PC-3 (cell line): ENCODE measurements at regions of chr2 and their contacts with region 1.

Region 1: GRCh38 chr2:140502951-140503630 is 1627.7 kb downstream of the LRP1B start:
- DNase-seq: peak; percentile 95
- ATAC-seq: peak; percentile 99
- H3K4me3 ChIP-seq: peak overlapping the region; percentile 61
- H3K27ac ChIP-seq: peak overlapping the region; percentile 93
- H3K4me1 ChIP-seq: peaks cover 23% of the 10 kb centered on the region
- H3K27me3 ChIP-seq: no peaks in the 10 kb centered on the region
- CTCF ChIP-seq: no peak

Region 2: GRCh38 chr2:140344842-140345241 is 158.2 kb before region 1 on chr2:
- CTCF ChIA-PET with region 1: no interaction called
- POLR2A ChIA-PET with region 1: no interaction called
- intact Hi-C with region 1: loop called (anchors 5 kb)
- DNase-seq: peak; percentile 90
- ATAC-seq: peak; percentile 88
- H3K4me3 ChIP-seq: peak overlapping the region; percentile 58; the same call in 1 of the 2 replicates
- H3K27ac ChIP-seq: peak overlapping the region; percentile 93
- H3K4me1 ChIP-seq: peaks cover 18% of the 10 kb centered on the region
- H3K27me3 ChIP-seq: no peaks in the 10 kb centered on the region
- CTCF ChIP-seq: no peak

Region 3: DNA sequence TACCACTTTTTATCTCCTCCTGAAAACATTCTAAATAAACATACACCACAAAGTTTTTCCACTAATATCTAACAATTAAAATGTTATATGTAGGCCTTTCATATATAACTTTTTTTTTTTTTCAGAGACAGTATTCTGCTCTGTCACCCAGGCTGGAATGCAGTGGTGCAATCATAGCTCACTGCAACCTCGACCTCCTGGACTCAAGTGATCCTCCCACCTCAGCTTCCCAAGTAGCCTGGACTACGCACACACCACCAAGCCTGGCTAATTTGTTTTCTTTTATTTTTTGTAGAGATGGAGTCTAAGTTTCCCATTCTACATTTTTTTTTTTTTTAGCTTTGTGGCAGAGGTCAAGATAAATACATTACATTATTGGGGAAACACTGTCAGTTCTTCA is 110.3 kb before region 1 on chr2:
- CTCF ChIA-PET with region 1: no interaction called
- POLR2A ChIA-PET with region 1: no interaction called
- intact Hi-C with region 1: loop called (anchors 1 kb)
- DNase-seq: no peak
- ATAC-seq: no peak
- H3K4me3 ChIP-seq: no peak overlapping the region
- H3K27ac ChIP-seq: no peak overlapping the region
- H3K4me1 ChIP-seq: peaks cover 26% of the 10 kb centered on the region
- H3K27me3 ChIP-seq: no peaks in the 10 kb centered on the region
- CTCF ChIP-seq: no peak

Region 4: DNA sequence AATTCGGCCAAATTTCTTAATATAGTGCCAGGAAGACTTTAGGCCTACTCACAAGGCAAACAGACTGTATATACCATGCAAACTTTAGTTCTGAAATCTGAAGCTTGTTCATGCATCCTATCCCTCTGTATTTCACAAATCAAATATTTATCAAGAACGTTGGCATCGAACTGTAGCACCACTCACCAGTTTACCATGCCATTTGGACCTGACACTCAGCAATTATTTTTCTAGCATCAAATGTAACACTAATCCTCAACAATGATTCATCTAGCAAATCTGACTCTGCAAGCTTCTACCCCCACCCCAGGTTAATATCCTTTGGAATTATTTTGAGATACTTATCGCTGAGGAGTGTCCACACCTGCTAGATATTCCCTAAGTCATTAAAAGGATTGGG is 121.1 kb after region 1 on chr2:
- CTCF ChIA-PET with region 1: no interaction called
- POLR2A ChIA-PET with region 1: no interaction called
- intact Hi-C with region 1: loop called (anchors 10 kb)
- DNase-seq: peak; percentile 94
- ATAC-seq: peak; percentile 99
- H3K4me3 ChIP-seq: no peak overlapping the region
- H3K27ac ChIP-seq: peak overlapping the region; percentile 75
- H3K4me1 ChIP-seq: peaks cover 21% of the 10 kb centered on the region
- H3K27me3 ChIP-seq: no peaks in the 10 kb centered on the region
- CTCF ChIP-seq: no peak

Region 5: DNA sequence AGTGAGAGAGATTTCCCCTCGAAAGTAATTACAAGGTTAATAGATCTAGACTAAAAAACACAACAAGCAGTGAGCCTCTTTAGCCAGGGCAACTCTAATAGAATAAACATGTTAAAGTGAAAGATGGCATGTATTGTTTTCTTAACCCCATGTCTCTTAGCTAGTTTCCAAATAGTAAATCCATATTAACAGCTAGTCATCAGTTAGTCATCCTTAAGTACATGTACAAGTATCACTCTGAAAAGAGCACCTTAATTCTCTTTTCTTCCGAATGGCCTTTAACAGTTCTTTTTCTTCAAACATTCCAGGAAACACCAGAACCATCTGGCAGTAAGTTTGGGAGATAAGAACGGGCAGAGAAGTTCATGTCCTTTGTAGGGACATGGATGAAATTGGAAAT is 147.7 kb after region 1 on chr2:
- CTCF ChIA-PET with region 1: no interaction called
- POLR2A ChIA-PET with region 1: no interaction called
- intact Hi-C with region 1: loop called (anchors 5 kb)
- DNase-seq: peak; percentile 81
- ATAC-seq: peak; percentile 90
- H3K4me3 ChIP-seq: no peak overlapping the region
- H3K27ac ChIP-seq: peak overlapping the region; percentile 76
- H3K4me1 ChIP-seq: peaks cover 28% of the 10 kb centered on the region
- H3K27me3 ChIP-seq: no peaks in the 10 kb centered on the region
- CTCF ChIP-seq: no peak

Region 6: GRCh38 chr2:140808816-140809215 is 305.7 kb after region 1 on chr2:
- CTCF ChIA-PET with region 1: no interaction called
- POLR2A ChIA-PET with region 1: no interaction called
- intact Hi-C with region 1: loop called (anchors 10 kb)
- DNase-seq: peak; percentile 40
- ATAC-seq: peak; percentile 53
- H3K4me3 ChIP-seq: no peak overlapping the region
- H3K27ac ChIP-seq: no peak overlapping the region
- H3K4me1 ChIP-seq: no peaks in the 10 kb centered on the region
- H3K27me3 ChIP-seq: no peaks in the 10 kb centered on the region
- CTCF ChIP-seq: peak; percentile 60

Region 7: DNA sequence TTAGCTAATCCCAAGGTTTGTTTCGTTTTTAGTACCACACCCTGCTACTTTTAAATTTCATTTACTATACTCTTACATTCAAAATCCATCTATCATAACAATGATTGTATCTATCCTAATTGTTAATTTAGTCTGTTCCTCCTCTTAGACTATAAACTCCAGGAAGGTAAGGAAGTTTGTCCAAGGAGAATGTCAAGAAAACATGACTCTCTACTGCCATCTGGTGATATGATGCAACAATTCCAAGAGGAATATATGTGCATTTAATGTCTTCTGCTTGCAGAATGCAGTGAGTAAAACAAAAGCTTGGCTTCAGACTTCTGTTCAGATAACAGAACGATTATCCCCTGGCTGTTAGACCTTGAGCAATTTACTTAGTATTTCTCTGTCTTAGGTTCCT is 360.6 kb after region 1 on chr2:
- CTCF ChIA-PET with region 1: no interaction called
- POLR2A ChIA-PET with region 1: no interaction called
- intact Hi-C with region 1: loop called (anchors 5 kb)
- DNase-seq: peak; percentile 76
- ATAC-seq: peak; percentile 48
- H3K4me3 ChIP-seq: no peak overlapping the region
- H3K27ac ChIP-seq: no peak overlapping the region
- H3K4me1 ChIP-seq: no peaks in the 10 kb centered on the region
- H3K27me3 ChIP-seq: no peaks in the 10 kb centered on the region
- CTCF ChIP-seq: peak; percentile 74